Keratinocyte (primary cell): ENCODE measurements at regions of chr3 and their contacts with region 1.

Region 1: GRCh38 chr3:112642912-112643506 is 2.1 kb upstream of the CCDC80 start:
- DNase-seq: no peak
- H3K4me3 ChIP-seq: peak overlapping the region in 1 of 3 experiments; percentile 40
- H3K27ac ChIP-seq: peak overlapping the region; percentile 34
- H3K4me1 ChIP-seq: peaks cover 46% of the 10 kb centered on the region
- H3K27me3 ChIP-seq: no peaks in the 10 kb centered on the region
- CTCF ChIP-seq: peak; percentile 87 to 96 (median 93)

Region 2: GRCh38 chr3:113002679-113003078 is 359.7 kb after region 1 on chr3:
- dilution Hi-C with region 1: loop called (anchors 10 kb)
- DNase-seq: no peak
- H3K4me3 ChIP-seq: no peak overlapping the region
- H3K27ac ChIP-seq: no peak overlapping the region
- H3K4me1 ChIP-seq: no peaks in the 10 kb centered on the region
- H3K27me3 ChIP-seq: no peaks in the 10 kb centered on the region
- CTCF ChIP-seq: no peak